WTC11 (cell line): ENCODE measurements at regions of chr1 and their contacts with region 1.

Region 1: GRCh38 chr1:228059634-228060457 is 22.7 kb upstream of the ARF1 start:
- DNase-seq: peak; percentile 100
- ATAC-seq: peak; percentile 84
- H3K4me3 Mint-ChIP-seq: peak overlapping the region; percentile 74
- H3K27ac Mint-ChIP-seq: no peak overlapping the region
- H3K4me1 Mint-ChIP-seq: peaks cover 5% of the 10 kb centered on the region
- H3K27me3 Mint-ChIP-seq: peaks cover 87% of the 10 kb centered on the region
- CTCF ChIP-seq: no peak

Region 2: GRCh38 chr1:228073857-228074545 is 14.2 kb after region 1 on chr1:
- CTCF ChIA-PET with region 1: interaction called, 11 read pairs
- POLR2A ChIA-PET with region 1: interaction called, 3 read pairs
- DNase-seq: peak; percentile 67
- ATAC-seq: peak; percentile 77
- H3K4me3 Mint-ChIP-seq: no peak overlapping the region
- H3K27ac Mint-ChIP-seq: no peak overlapping the region
- H3K4me1 Mint-ChIP-seq: peaks cover 8% of the 10 kb centered on the region
- H3K27me3 Mint-ChIP-seq: peaks cover 92% of the 10 kb centered on the region
- CTCF ChIP-seq: 0 out of 2 replicates have a peak, but pooled peaks have one; percentile 13

Region 3: GRCh38 chr1:228082135-228082891 is 22.5 kb after region 1 on chr1 and contains the start of gene ARF1:
- CTCF ChIA-PET with region 1: interaction called, 15 read pairs
- POLR2A ChIA-PET with region 1: interaction called, 3 read pairs
- DNase-seq: peak; percentile 88
- ATAC-seq: peak; percentile 85
- H3K4me3 Mint-ChIP-seq: peak within 1 kb of the TSS; percentile 95
- H3K27ac Mint-ChIP-seq: peak within 1 kb of the TSS; percentile 94
- H3K4me1 Mint-ChIP-seq: peaks cover 33% of the 10 kb centered on the region
- H3K27me3 Mint-ChIP-seq: peaks cover 36% of the 10 kb centered on the region
- CTCF ChIP-seq: no peak
- total RNA-seq, gene ARF1: 295 to 330 TPM (median 300 TPM) in 3 replicates

Region 4: GRCh38 chr1:228158151-228159022 is 98.5 kb after region 1 on chr1:
- CTCF ChIA-PET with region 1: no interaction called
- POLR2A ChIA-PET with region 1: no interaction called
- DNase-seq: no peak
- ATAC-seq: no peak
- H3K4me3 Mint-ChIP-seq: no peak overlapping the region
- H3K27ac Mint-ChIP-seq: no peak overlapping the region
- H3K4me1 Mint-ChIP-seq: peaks cover 5% of the 10 kb centered on the region; the same call in 1 of the 2 replicates
- H3K27me3 Mint-ChIP-seq: peaks cover 22% of the 10 kb centered on the region
- CTCF ChIP-seq: no peak